ENCODE measurements at regions of chr3 and their contacts with region 1.

Region 1: GRCh38 chr3:45841757-45842491 is at the start of gene LZTFL1:
- DNase-seq: peak; percentile 88
- ATAC-seq: peak; percentile 99
- H3K4me3 ChIP-seq: peak within 1 kb of the TSS; percentile 92
- H3K27ac ChIP-seq: no peak within 1 kb of the TSS; the same call in 1 of the 2 replicates
- H3K4me1 ChIP-seq: no peaks in the 10 kb centered on the region; the same call in 1 of the 2 replicates
- H3K27me3 ChIP-seq: no peaks in the 10 kb centered on the region; a peak in 1 of 4 replicates
- CTCF ChIP-seq: no peak
- EP300 ChIP-seq: no peak
- POLR2A ChIP-seq: peak; percentile 79
- RAD21 ChIP-seq: no peak
- polyA plus RNA-seq, gene LZTFL1: 10.0 to 10.8 TPM

Region 2: GRCh38 chr3:45807681-45808540 is 34.0 kb before region 1 on chr3:
- CTCF ChIA-PET with region 1: no interaction called
- POLR2A ChIA-PET with region 1: no interaction called
- RAD21 ChIA-PET with region 1: no interaction called
- SMC1A ChIA-PET with region 1: no interaction called
- in situ Hi-C with region 1: no loop called
- intact Hi-C with region 1: no loop called
- DNase-seq: no peak
- ATAC-seq: no peak
- H3K4me3 ChIP-seq: no peak overlapping the region
- H3K27ac ChIP-seq: no peak overlapping the region
- H3K4me1 ChIP-seq: no peaks in the 10 kb centered on the region
- H3K27me3 ChIP-seq: no peaks in the 10 kb centered on the region
- CTCF ChIP-seq: no peak
- EP300 ChIP-seq: no peak
- POLR2A ChIP-seq: no peak
- RAD21 ChIP-seq: no peak

Region 3: GRCh38 chr3:45826321-45826720 is 15.6 kb before region 1 on chr3:
- CTCF ChIA-PET with region 1: interaction called, 4 read pairs
- POLR2A ChIA-PET with region 1: no interaction called
- RAD21 ChIA-PET with region 1: no interaction called
- SMC1A ChIA-PET with region 1: interaction called, 13 read pairs
- in situ Hi-C with region 1: no loop called
- intact Hi-C with region 1: no loop called
- DNase-seq: no peak
- ATAC-seq: no peak
- H3K4me3 ChIP-seq: no peak overlapping the region
- H3K27ac ChIP-seq: no peak overlapping the region
- H3K4me1 ChIP-seq: no peaks in the 10 kb centered on the region
- H3K27me3 ChIP-seq: no peaks in the 10 kb centered on the region
- CTCF ChIP-seq: no peak
- EP300 ChIP-seq: no peak
- POLR2A ChIP-seq: no peak
- RAD21 ChIP-seq: no peak

Region 4: DNA sequence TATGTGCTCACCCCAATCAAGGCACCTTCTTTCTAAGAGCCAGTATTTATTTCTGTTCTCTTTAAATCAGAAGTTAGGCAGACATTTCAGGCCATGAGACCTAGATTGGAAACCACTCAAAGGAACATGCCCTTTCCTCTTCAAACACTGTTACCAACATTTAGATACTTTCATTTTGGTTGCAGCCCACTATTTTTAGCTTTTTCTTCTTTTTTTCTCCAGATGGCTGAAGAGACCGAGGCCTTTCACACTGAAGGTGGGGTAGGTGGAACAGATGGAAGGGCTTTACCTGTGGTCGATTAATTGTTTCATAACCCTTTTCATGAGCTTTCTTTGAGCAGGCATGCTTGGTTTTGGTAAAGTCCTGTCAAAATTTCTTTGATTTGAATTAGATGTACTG is 10.9 kb after region 1 on chr3:
- CTCF ChIA-PET with region 1: interaction called, 7 read pairs
- POLR2A ChIA-PET with region 1: interaction called, 5 read pairs
- RAD21 ChIA-PET with region 1: interaction called, 16 read pairs
- SMC1A ChIA-PET with region 1: interaction called, 24 read pairs
- in situ Hi-C with region 1: no loop called
- intact Hi-C with region 1: no loop called
- DNase-seq: peak; percentile 9
- ATAC-seq: peak; percentile 78
- H3K4me3 ChIP-seq: no peak overlapping the region
- H3K27ac ChIP-seq: no peak overlapping the region
- H3K4me1 ChIP-seq: peaks cover 27% of the 10 kb centered on the region
- H3K27me3 ChIP-seq: no peaks in the 10 kb centered on the region
- CTCF ChIP-seq: no peak
- EP300 ChIP-seq: peak in 1 of 2 experiments; percentile 44; a peak in 1 of 4 replicates
- POLR2A ChIP-seq: no peak
- RAD21 ChIP-seq: peak; percentile 25; the same call in 1 of the 2 replicates

Region 5: GRCh38 chr3:45864760-45865519 is 23.0 kb after region 1 on chr3:
- CTCF ChIA-PET with region 1: interaction called, 5 read pairs
- POLR2A ChIA-PET with region 1: interaction called, 6 read pairs
- RAD21 ChIA-PET with region 1: interaction called, 52 read pairs
- SMC1A ChIA-PET with region 1: interaction called, 71 read pairs
- in situ Hi-C with region 1: no loop called
- intact Hi-C with region 1: no loop called
- DNase-seq: peak; percentile 71
- ATAC-seq: peak; percentile 84
- H3K4me3 ChIP-seq: no peak overlapping the region
- H3K27ac ChIP-seq: peak overlapping the region; percentile 90
- H3K4me1 ChIP-seq: peaks cover 71% of the 10 kb centered on the region
- H3K27me3 ChIP-seq: no peaks in the 10 kb centered on the region; a peak in 2 of 4 replicates
- CTCF ChIP-seq: no peak
- EP300 ChIP-seq: peak; percentile 99
- POLR2A ChIP-seq: no peak; the same call in 1 of the 2 replicates
- RAD21 ChIP-seq: peak; percentile 35

Region 6: GRCh38 chr3:45870099-45870498 is 28.2 kb after region 1 on chr3:
- CTCF ChIA-PET with region 1: no interaction called
- POLR2A ChIA-PET with region 1: no interaction called
- RAD21 ChIA-PET with region 1: interaction called, 52 read pairs
- SMC1A ChIA-PET with region 1: interaction called, 71 read pairs
- in situ Hi-C with region 1: no loop called
- intact Hi-C with region 1: no loop called
- DNase-seq: no peak
- ATAC-seq: peak; percentile 64
- H3K4me3 ChIP-seq: no peak overlapping the region
- H3K27ac ChIP-seq: no peak overlapping the region
- H3K4me1 ChIP-seq: peaks cover 43% of the 10 kb centered on the region
- H3K27me3 ChIP-seq: no peaks in the 10 kb centered on the region; a peak in 1 of 4 replicates
- CTCF ChIP-seq: no peak
- EP300 ChIP-seq: peak in 1 of 2 experiments; percentile 62; a peak in 2 of 4 replicates
- POLR2A ChIP-seq: no peak
- RAD21 ChIP-seq: no peak